GM10248 (cell line): ENCODE measurements at regions of chr1 and their contacts with region 1.

Region 1: GRCh38 chr1:32400876-32401631 is 6.8 kb upstream of the BSDC1 start:
- DNase-seq: peak; percentile 72
- CTCF ChIP-seq: peak; percentile 90

Region 2: DNA sequence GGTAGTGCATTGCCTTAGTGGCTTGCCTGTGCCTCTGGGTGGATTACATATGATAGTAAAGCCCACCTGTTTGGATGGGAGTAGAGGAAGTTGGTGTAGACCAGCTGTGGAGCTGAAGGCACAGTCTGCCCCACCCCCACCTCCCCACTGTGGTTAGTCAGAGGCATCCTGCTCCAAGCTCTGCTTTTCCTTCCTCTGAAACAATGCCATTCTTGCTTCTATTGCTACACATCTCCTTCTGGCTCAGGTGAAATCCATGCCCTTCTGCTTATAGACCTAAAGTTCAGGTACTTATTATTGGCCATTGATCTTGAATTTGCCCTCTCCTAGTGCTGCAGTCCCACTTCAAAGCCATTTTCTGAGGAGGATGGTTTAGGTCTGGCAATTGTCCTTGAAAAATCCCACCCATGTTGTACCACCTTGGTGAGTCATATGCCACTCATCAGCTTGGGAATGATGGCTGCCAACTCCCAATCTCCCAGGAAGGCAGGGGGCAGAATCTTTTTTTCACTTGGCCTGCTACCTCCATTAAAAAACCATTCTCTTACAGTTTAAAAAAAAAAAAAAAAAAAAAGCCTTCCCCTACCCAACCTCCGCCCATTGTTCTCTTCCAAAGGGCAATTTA is 228.3 kb before region 1 on chr1:
- CTCF ChIA-PET with region 1: no interaction called
- POLR2A ChIA-PET with region 1: no interaction called
- DNase-seq: no peak
- CTCF ChIP-seq: no peak

Region 3: GRCh38 chr1:32386676-32387392 is 14.2 kb before region 1 on chr1:
- CTCF ChIA-PET with region 1: interaction called, 16 read pairs
- POLR2A ChIA-PET with region 1: interaction called, 3 read pairs
- DNase-seq: no peak
- CTCF ChIP-seq: no peak

Region 4: DNA sequence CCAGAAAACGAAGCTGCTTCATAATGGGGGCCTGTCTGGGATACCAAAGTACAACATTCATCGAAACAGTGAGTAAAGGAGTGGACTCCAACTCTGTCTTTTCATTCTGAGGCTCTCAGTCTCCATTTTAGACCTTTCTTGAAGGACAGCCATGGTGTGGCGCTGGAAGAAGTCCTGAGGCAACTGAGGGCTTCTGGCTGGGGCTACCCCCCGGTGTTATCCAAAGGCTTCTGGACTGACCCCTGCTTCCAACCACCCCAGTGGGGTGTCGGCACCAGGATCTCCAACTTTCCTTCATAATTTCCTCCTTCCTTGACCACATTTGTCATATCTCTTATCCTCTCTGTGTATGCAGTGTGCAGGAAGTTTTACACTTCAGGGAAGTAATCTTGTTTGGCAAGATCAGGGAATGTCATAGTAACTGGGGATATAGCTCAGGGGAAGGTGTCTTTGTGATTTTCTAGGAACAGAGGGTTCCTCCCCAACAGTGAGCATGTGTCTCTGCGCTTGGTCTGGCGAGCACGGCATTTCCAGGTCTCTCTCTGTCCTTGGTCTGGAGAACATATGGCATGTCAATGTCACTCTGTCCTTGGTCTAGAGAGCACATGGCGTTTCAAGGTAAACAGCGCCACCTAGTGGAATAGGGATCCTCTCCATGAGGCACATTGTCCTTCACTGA is 12.6 kb after region 1 on chr1:
- CTCF ChIA-PET with region 1: interaction called, 70 read pairs
- POLR2A ChIA-PET with region 1: interaction called, 3 read pairs
- DNase-seq: peak; percentile 51
- CTCF ChIP-seq: peak; percentile 70

Region 5: GRCh38 chr1:32426489-32427255 is 25.6 kb after region 1 on chr1:
- CTCF ChIA-PET with region 1: interaction called, 27 read pairs
- POLR2A ChIA-PET with region 1: no interaction called
- DNase-seq: no peak
- CTCF ChIP-seq: no peak

Region 6: GRCh38 chr1:32870615-32871363 is 469.7 kb after region 1 on chr1 and contains the start of gene FNDC5:
- CTCF ChIA-PET with region 1: interaction called, 12 read pairs
- POLR2A ChIA-PET with region 1: no interaction called
- DNase-seq: no peak
- CTCF ChIP-seq: no peak